PC-3 (cell line): ENCODE measurements at regions of chr10 and their contacts with region 1.

Region 1: GRCh38 chr10:63772491-63772890 is 251.3 kb downstream of the REEP3 start:
- DNase-seq: no peak
- ATAC-seq: no peak
- H3K4me3 ChIP-seq: no peak overlapping the region
- H3K27ac ChIP-seq: no peak overlapping the region
- H3K4me1 ChIP-seq: no peaks in the 10 kb centered on the region
- H3K27me3 ChIP-seq: no peaks in the 10 kb centered on the region
- CTCF ChIP-seq: no peak

Region 2: GRCh38 chr10:65570143-65571010 is 1797.9 kb after region 1 on chr10:
- CTCF ChIA-PET with region 1: no interaction called
- POLR2A ChIA-PET with region 1: interaction called, 12 read pairs
- intact Hi-C with region 1: no loop called
- DNase-seq: peak; percentile 89
- ATAC-seq: peak; percentile 93
- H3K4me3 ChIP-seq: peak overlapping the region; percentile 78
- H3K27ac ChIP-seq: peak overlapping the region; percentile 45
- H3K4me1 ChIP-seq: peaks cover 15% of the 10 kb centered on the region
- H3K27me3 ChIP-seq: no peaks in the 10 kb centered on the region
- CTCF ChIP-seq: no peak